WTC11 (cell line): ENCODE measurements at regions of chr3 and their contacts with region 1.

Region 1: GRCh38 chr3:132034486-132035464 is at the start of gene CPNE4:
- DNase-seq: peak; percentile 97
- ATAC-seq: peak; percentile 89
- H3K4me3 Mint-ChIP-seq: peak within 1 kb of the TSS; percentile 94
- H3K27ac Mint-ChIP-seq: peak within 1 kb of the TSS; percentile 64
- H3K4me1 Mint-ChIP-seq: peaks cover 11% of the 10 kb centered on the region
- H3K27me3 Mint-ChIP-seq: peaks cover 42% of the 10 kb centered on the region
- CTCF ChIP-seq: peak; percentile 92
- total RNA-seq, gene CPNE4: 1.7 to 2.6 TPM (median 2.4 TPM) in 3 replicates

Region 2: GRCh38 chr3:131526801-131527347 is 507.9 kb before region 1 on chr3:
- CTCF ChIA-PET with region 1: interaction called, 16 read pairs
- POLR2A ChIA-PET with region 1: no interaction called
- DNase-seq: peak; percentile 91
- ATAC-seq: peak; percentile 99
- H3K4me3 Mint-ChIP-seq: peak overlapping the region; percentile 38; the same call in 1 of the 2 replicates
- H3K27ac Mint-ChIP-seq: no peak overlapping the region
- H3K4me1 Mint-ChIP-seq: no peaks in the 10 kb centered on the region
- H3K27me3 Mint-ChIP-seq: no peaks in the 10 kb centered on the region; the same call in 1 of the 2 replicates
- CTCF ChIP-seq: no peak

Region 3: GRCh38 chr3:131794766-131795388 is 239.9 kb before region 1 on chr3:
- CTCF ChIA-PET with region 1: interaction called, 57 read pairs
- POLR2A ChIA-PET with region 1: no interaction called
- DNase-seq: peak; percentile 37
- ATAC-seq: peak; percentile 89
- H3K4me3 Mint-ChIP-seq: no peak overlapping the region
- H3K27ac Mint-ChIP-seq: no peak overlapping the region
- H3K4me1 Mint-ChIP-seq: peaks cover 38% of the 10 kb centered on the region
- H3K27me3 Mint-ChIP-seq: peaks cover 15% of the 10 kb centered on the region
- CTCF ChIP-seq: peak; percentile 77

Region 4: DNA sequence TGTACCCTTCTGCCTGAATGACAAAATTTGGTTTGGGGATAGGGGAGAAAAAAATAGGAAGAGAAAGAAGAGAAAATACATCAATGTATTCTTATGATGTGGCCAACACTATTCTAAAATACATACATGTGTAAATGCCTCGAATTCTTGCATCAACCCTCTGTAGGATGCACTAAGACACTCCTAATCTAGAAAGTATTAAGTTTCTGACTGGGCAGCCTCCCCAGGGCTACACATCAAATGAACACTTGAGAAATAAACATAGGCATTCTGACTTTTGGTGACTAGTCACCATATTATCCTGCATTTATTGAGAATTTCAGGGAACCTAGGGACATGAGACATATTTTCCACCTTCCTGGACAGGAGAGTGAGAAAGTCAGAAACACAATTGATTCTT is 109.2 kb before region 1 on chr3:
- CTCF ChIA-PET with region 1: no interaction called
- POLR2A ChIA-PET with region 1: no interaction called
- DNase-seq: no peak
- ATAC-seq: no peak
- H3K4me3 Mint-ChIP-seq: no peak overlapping the region
- H3K27ac Mint-ChIP-seq: no peak overlapping the region
- H3K4me1 Mint-ChIP-seq: peaks cover 24% of the 10 kb centered on the region
- H3K27me3 Mint-ChIP-seq: no peaks in the 10 kb centered on the region
- CTCF ChIP-seq: no peak

Region 5: DNA sequence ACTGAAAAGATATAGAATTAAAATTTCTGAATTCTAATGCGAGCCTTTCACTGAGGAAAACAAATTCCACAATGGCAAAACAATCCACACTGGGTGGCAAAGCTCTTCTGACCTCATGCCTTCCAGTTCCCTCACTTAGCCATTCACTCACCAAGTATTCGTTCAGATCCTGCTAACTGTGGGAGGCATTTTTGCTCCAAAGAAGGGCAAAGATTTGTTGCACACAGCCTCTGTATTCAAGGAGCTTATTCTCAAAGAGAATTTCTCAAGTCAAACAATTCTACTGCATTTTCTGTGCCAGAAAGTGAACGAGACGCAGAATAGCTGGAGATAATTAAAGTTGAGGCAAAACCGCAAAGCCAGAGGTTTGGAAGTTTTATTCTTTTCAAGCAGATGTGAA is 77.3 kb before region 1 on chr3:
- CTCF ChIA-PET with region 1: interaction called, 10 read pairs
- POLR2A ChIA-PET with region 1: no interaction called
- DNase-seq: no peak
- ATAC-seq: peak; percentile 13; the same call in 1 of the 2 replicates
- H3K4me3 Mint-ChIP-seq: no peak overlapping the region
- H3K27ac Mint-ChIP-seq: peak overlapping the region; percentile 3; the same call in 1 of the 2 replicates
- H3K4me1 Mint-ChIP-seq: peaks cover 19% of the 10 kb centered on the region
- H3K27me3 Mint-ChIP-seq: no peaks in the 10 kb centered on the region; the same call in 1 of the 2 replicates
- CTCF ChIP-seq: no peak

Region 6: GRCh38 chr3:132020058-132020457 is 14.7 kb before region 1 on chr3:
- CTCF ChIA-PET with region 1: interaction called, 10 read pairs
- POLR2A ChIA-PET with region 1: no interaction called
- DNase-seq: no peak
- ATAC-seq: no peak; the same call in 1 of the 2 replicates
- H3K4me3 Mint-ChIP-seq: no peak overlapping the region
- H3K27ac Mint-ChIP-seq: no peak overlapping the region
- H3K4me1 Mint-ChIP-seq: no peaks in the 10 kb centered on the region
- H3K27me3 Mint-ChIP-seq: no peaks in the 10 kb centered on the region
- CTCF ChIP-seq: no peak

Region 7: GRCh38 chr3:132180337-132180791 is 145.6 kb after region 1 on chr3:
- CTCF ChIA-PET with region 1: interaction called, 30 read pairs
- POLR2A ChIA-PET with region 1: no interaction called
- DNase-seq: no peak
- ATAC-seq: peak; percentile 94
- H3K4me3 Mint-ChIP-seq: no peak overlapping the region
- H3K27ac Mint-ChIP-seq: peak overlapping the region; percentile 21; the same call in 1 of the 2 replicates
- H3K4me1 Mint-ChIP-seq: peaks cover 11% of the 10 kb centered on the region
- H3K27me3 Mint-ChIP-seq: no peaks in the 10 kb centered on the region
- CTCF ChIP-seq: peak; percentile 55